ENCODE measurements at regions of chr7 and their contacts with region 1.

Region 1: GRCh38 chr7:70775570-70776156 is 356.3 kb upstream of the GALNT17 start:
- DNase-seq: peak in 2 of 5 donors; percentile 34 to 51
- H3K4me3 ChIP-seq: no peak overlapping the region
- H3K4me3 Mint-ChIP-seq: peak overlapping the region in 5 of 8 donors; percentile 5 to 71 (median 64)
- H3K27ac ChIP-seq: peak overlapping the region; percentile 38
- H3K27ac Mint-ChIP-seq: peak overlapping the region; percentile 43 to 98 (median 92)
- H3K4me1 ChIP-seq: peaks cover 46% of the 10 kb centered on the region
- H3K4me1 Mint-ChIP-seq: peaks cover 34 to 71% (median 44%) of the 10 kb centered on the region in 4 donors
- H3K27me3 ChIP-seq: no peaks in the 10 kb centered on the region
- H3K27me3 Mint-ChIP-seq: no peaks in the 10 kb centered on the region

Region 2: DNA sequence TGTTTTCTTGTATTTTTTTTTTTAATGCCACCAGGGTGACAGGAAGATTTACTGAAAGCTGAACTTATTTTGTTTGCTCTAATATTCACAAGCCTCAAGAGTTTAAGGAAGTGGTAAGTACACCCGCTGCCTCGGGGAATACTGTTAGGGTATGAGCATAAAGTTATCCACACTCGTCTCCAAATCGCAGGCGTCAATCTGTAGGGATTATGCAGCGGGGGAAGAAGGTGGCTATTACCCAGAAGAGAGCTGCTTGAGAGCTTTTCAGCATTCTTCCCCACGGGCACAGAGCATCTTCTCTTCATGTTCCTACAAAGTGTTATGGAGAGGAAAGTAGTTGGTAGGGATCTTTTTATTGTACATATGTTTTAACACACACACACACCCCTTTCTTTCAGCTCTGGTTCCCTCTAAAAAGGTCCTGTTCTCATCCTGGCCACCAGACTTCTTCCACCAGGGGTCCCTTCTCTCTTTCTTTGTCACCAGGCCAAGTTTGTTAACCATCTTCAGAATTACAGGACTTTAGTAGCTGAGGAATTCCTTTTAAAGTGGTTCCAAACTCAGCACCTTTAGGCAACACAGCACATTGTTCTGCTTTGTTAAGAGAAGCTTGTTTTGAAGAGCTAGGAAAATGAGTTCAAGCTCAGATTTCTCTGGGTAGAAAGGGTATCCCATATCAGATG is 55.3 kb before region 1 on chr7:
- CTCF ChIA-PET with region 1: interaction called, 38 read pairs
- POLR2A ChIA-PET with region 1: interaction called, 4 read pairs
- intact Hi-C with region 1: loop called (anchors 5 kb)
- DNase-seq: no peak
- H3K4me3 ChIP-seq: no peak overlapping the region
- H3K4me3 Mint-ChIP-seq: peak overlapping the region; percentile 3 to 69 (median 56)
- H3K27ac ChIP-seq: no peak overlapping the region
- H3K27ac Mint-ChIP-seq: peak overlapping the region; percentile 33 to 83 (median 71)
- H3K4me1 ChIP-seq: peaks cover 10% of the 10 kb centered on the region
- H3K4me1 Mint-ChIP-seq: peaks cover 24 to 61% (median 38%) of the 10 kb centered on the region in 4 donors
- H3K27me3 ChIP-seq: no peaks in the 10 kb centered on the region
- H3K27me3 Mint-ChIP-seq: no peaks in the 10 kb centered on the region

Region 3: DNA sequence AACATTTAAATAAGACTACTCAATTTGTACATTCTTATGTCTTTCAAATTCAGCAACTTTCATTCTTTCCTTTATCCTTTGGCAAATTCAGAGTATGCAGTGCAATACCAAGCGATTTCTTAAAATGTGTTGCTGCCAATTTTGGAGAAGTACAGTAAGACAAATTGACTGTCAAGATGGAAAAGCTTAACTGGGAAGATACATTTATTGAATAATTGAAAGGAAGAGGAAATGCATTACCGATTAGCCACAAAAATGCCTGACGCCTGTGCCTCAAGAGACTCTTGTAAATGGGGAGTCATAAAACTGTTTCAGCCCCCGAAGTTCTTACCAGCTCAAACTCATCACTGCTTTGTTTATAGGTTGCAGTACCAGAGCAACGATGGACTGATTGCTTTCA is 17.0 kb before region 1 on chr7:
- CTCF ChIA-PET with region 1: interaction called, 16 read pairs
- POLR2A ChIA-PET with region 1: interaction called, 8 read pairs
- intact Hi-C with region 1: no loop called
- DNase-seq: no peak
- H3K4me3 ChIP-seq: no peak overlapping the region
- H3K4me3 Mint-ChIP-seq: peak overlapping the region in 4 of 8 donors; percentile 14 to 53 (median 40)
- H3K27ac ChIP-seq: no peak overlapping the region
- H3K27ac Mint-ChIP-seq: peak overlapping the region in 3 of 7 donors; percentile 9 to 48 (median 17)
- H3K4me1 ChIP-seq: peaks cover 5% of the 10 kb centered on the region
- H3K4me1 Mint-ChIP-seq: peaks cover 17 to 43% (median 26%) of the 10 kb centered on the region in 4 donors
- H3K27me3 ChIP-seq: no peaks in the 10 kb centered on the region
- H3K27me3 Mint-ChIP-seq: no peaks in the 10 kb centered on the region

Region 4: DNA sequence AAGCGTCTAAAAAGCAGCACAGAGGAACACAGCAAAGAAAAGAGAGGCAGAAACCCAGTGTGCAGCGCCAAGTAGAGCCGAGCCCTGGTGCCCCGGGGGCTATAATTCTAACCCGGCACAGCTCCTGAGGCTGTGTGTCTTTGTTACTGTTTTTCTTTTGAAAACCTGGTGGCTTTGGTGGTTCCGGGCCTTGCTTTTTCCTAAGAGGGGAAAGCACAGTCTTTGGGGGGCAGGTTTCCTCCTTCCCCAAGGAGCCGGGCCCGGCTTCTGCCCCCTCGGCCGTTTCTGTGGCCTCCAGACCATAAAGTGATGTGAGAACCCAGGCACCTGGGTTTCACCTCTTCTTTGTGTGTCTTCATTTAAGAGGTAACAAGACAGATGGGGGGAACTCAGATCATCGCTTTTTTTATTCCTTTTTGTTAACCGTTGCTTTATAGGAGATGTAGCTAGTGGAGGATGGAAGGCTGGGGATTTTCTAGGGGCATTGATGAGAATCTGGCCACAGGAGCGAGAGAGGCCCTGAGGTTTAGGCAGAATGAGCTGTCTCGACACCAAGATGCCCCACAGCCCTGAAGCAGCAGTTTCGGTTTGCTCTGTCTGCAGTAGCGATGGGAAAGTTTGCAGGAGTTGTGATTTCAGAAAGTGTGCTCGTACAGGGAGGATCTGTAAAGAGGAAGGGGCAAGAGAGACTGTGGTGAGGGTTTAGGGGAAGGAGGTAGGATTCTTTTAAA is 11.5 kb before region 1 on chr7:
- CTCF ChIA-PET with region 1: interaction called, 16 read pairs
- POLR2A ChIA-PET with region 1: interaction called, 8 read pairs
- intact Hi-C with region 1: no loop called
- DNase-seq: peak in 4 of 5 donors; percentile 33 to 59 (median 54)
- H3K4me3 ChIP-seq: peak overlapping the region in 1 of 2 donors; percentile 27
- H3K4me3 Mint-ChIP-seq: peak overlapping the region; percentile 84 to 91 (median 88)
- H3K27ac ChIP-seq: peak overlapping the region; percentile 63
- H3K27ac Mint-ChIP-seq: peak overlapping the region; percentile 74 to 98 (median 94)
- H3K4me1 ChIP-seq: peaks cover 5% of the 10 kb centered on the region
- H3K4me1 Mint-ChIP-seq: peaks cover 9 to 47% (median 26%) of the 10 kb centered on the region in 4 donors
- H3K27me3 ChIP-seq: no peaks in the 10 kb centered on the region
- H3K27me3 Mint-ChIP-seq: no peaks in the 10 kb centered on the region

Region 5: GRCh38 chr7:70788276-70788675 is 12.6 kb after region 1 on chr7:
- CTCF ChIA-PET with region 1: interaction called, 81 read pairs
- POLR2A ChIA-PET with region 1: interaction called, 145 read pairs
- intact Hi-C with region 1: loop called (anchors 1 kb)
- DNase-seq: peak; percentile 68 to 90 (median 81)
- H3K4me3 ChIP-seq: no peak overlapping the region
- H3K4me3 Mint-ChIP-seq: peak overlapping the region in 7 of 8 donors; percentile 54 to 86 (median 77)
- H3K27ac ChIP-seq: peak overlapping the region; percentile 60
- H3K27ac Mint-ChIP-seq: peak overlapping the region; percentile 95 to 99 (median 98)
- H3K4me1 ChIP-seq: peaks cover 39% of the 10 kb centered on the region
- H3K4me1 Mint-ChIP-seq: peaks cover 24 to 54% (median 34%) of the 10 kb centered on the region in 4 donors
- H3K27me3 ChIP-seq: no peaks in the 10 kb centered on the region
- H3K27me3 Mint-ChIP-seq: no peaks in the 10 kb centered on the region

Region 6: GRCh38 chr7:70797109-70797514 is 21.4 kb after region 1 on chr7:
- CTCF ChIA-PET with region 1: interaction called, 31 read pairs
- POLR2A ChIA-PET with region 1: interaction called, 24 read pairs
- intact Hi-C with region 1: no loop called
- DNase-seq: peak in 2 of 5 donors; percentile 26 to 31
- H3K4me3 ChIP-seq: no peak overlapping the region
- H3K4me3 Mint-ChIP-seq: peak overlapping the region in 6 of 8 donors; percentile 36 to 76 (median 66)
- H3K27ac ChIP-seq: no peak overlapping the region
- H3K27ac Mint-ChIP-seq: peak overlapping the region; percentile 78 to 97 (median 92)
- H3K4me1 ChIP-seq: peaks cover 20% of the 10 kb centered on the region
- H3K4me1 Mint-ChIP-seq: peaks cover 10 to 22% (median 14%) of the 10 kb centered on the region in 4 donors
- H3K27me3 ChIP-seq: no peaks in the 10 kb centered on the region
- H3K27me3 Mint-ChIP-seq: no peaks in the 10 kb centered on the region

Measured in CD4-positive, alpha-beta memory T cell (primary cell).